Mammary epithelial cell (primary cell): ENCODE measurements at regions of chr3 and their contacts with region 1.

Region 1: DNA sequence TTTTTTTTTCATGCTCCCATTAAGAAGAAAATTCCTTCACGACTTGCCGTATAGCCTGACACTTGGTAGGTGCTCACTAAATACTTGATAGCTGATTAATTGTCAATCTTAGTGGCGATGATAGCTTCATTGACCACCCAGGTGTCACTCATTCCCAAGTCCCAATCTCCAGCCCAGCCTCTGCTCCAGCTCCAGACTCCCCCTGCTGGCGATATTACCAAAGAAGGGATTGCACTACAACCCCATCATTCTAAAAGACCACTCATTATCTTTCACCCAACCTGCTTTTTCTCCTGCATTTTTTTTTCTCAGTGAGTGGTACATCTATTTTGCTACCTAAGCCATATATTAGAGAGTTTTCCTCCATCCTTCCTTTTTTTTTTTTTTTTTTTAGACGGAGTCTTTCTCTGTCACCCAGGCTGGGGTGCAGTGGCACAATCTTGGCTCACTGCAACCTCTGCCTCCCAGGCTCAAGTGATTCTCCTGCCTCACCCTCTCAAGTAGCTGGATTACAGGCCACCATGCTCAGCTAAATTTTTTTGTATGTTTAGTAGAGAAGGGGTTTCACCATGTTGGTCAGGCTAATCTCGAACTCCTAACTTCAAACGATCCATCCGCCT is 19.5 kb upstream of the COMMD2 start:
- DNase-seq: no peak
- H3K4me3 ChIP-seq: no peak overlapping the region
- H3K27ac ChIP-seq: no peak overlapping the region
- H3K4me1 ChIP-seq: no peaks in the 10 kb centered on the region
- H3K27me3 ChIP-seq: no peaks in the 10 kb centered on the region
- CTCF ChIP-seq: peak; percentile 82 to 85

Region 2: GRCh38 chr3:149371001-149371722 is 400.6 kb before region 1 on chr3:
- CTCF ChIA-PET with region 1: interaction called, 13 read pairs
- dilution Hi-C with region 1: no loop called
- in situ Hi-C with region 1: no loop called
- intact Hi-C with region 1: no loop called
- DNase-seq: peak; percentile 79
- H3K4me3 ChIP-seq: peak overlapping the region in 2 of 3 experiments; percentile 2 to 11
- H3K27ac ChIP-seq: peak overlapping the region; percentile 88
- H3K4me1 ChIP-seq: peaks cover 72% of the 10 kb centered on the region
- H3K27me3 ChIP-seq: no peaks in the 10 kb centered on the region
- CTCF ChIP-seq: peak; percentile 9 to 44

Region 3: GRCh38 chr3:149566292-149566975 is 205.3 kb before region 1 on chr3:
- CTCF ChIA-PET with region 1: interaction called, 26 read pairs
- dilution Hi-C with region 1: no loop called
- in situ Hi-C with region 1: no loop called
- intact Hi-C with region 1: no loop called
- DNase-seq: no peak
- H3K4me3 ChIP-seq: no peak overlapping the region
- H3K27ac ChIP-seq: no peak overlapping the region
- H3K4me1 ChIP-seq: peaks cover 4% of the 10 kb centered on the region
- H3K27me3 ChIP-seq: no peaks in the 10 kb centered on the region
- CTCF ChIP-seq: no peak

Region 4: DNA sequence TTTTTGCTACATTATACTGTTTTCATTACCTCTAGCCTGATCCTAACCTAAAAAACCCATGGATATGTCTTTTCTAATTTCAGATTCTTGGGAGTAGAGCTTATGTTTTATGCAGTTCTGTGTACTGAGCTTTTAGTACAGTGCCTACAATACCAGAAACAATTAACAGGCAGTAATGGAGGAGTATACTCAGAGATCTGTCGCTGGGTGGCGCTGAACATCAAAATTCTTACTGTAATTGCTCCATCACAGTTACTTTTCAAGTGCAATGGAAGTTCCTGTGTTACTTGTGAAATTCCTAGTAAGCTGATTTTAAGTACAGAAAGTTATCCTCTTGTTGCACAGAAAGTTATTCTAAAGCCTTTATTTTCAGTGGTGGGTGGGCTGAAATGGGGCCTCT is 108.1 kb after region 1 on chr3:
- CTCF ChIA-PET with region 1: no interaction called
- dilution Hi-C with region 1: no loop called
- in situ Hi-C with region 1: no loop called
- intact Hi-C with region 1: loop called (anchors 10 kb)
- DNase-seq: peak; percentile 49
- H3K4me3 ChIP-seq: no peak overlapping the region
- H3K27ac ChIP-seq: no peak overlapping the region
- H3K4me1 ChIP-seq: no peaks in the 10 kb centered on the region
- H3K27me3 ChIP-seq: no peaks in the 10 kb centered on the region
- CTCF ChIP-seq: peak; percentile 71 to 84